MCF 10A (cell line): ENCODE measurements at regions of chr1 and their contacts with region 1.

Region 1: GRCh38 chr1:156728597-156729462 is at the start of gene ISG20L2:
- DNase-seq: peak; percentile 98
- H3K4me3 Mint-ChIP-seq: no peak within 1 kb of the TSS
- H3K27ac Mint-ChIP-seq: no peak within 1 kb of the TSS
- H3K4me1 Mint-ChIP-seq: peaks cover 27% of the 10 kb centered on the region
- H3K27me3 Mint-ChIP-seq: no peaks in the 10 kb centered on the region
- CTCF ChIP-seq: no peak
- total RNA-seq, gene ISG20L2: 49.9 and 57.5 TPM in 2 replicates

Region 2: GRCh38 chr1:156625436-156626078 is 103.3 kb before region 1 on chr1:
- CTCF ChIA-PET with region 1: interaction called, 30 read pairs
- POLR2A ChIA-PET with region 1: interaction called, 3 read pairs
- intact Hi-C with region 1: loop called (anchors 1 kb)
- DNase-seq: peak; percentile 61
- H3K4me3 Mint-ChIP-seq: peak overlapping the region; percentile 35
- H3K27ac Mint-ChIP-seq: no peak overlapping the region
- H3K4me1 Mint-ChIP-seq: peaks cover 12% of the 10 kb centered on the region
- H3K27me3 Mint-ChIP-seq: peaks cover 61% of the 10 kb centered on the region
- CTCF ChIP-seq: peak; percentile 91

Region 3: GRCh38 chr1:156705918-156706656 is 22.7 kb before region 1 on chr1:
- CTCF ChIA-PET with region 1: interaction called, 2,415 read pairs
- POLR2A ChIA-PET with region 1: interaction called, 71 read pairs
- intact Hi-C with region 1: loop called (anchors 1 kb)
- DNase-seq: peak; percentile 57
- H3K4me3 Mint-ChIP-seq: peak overlapping the region; percentile 30
- H3K27ac Mint-ChIP-seq: no peak overlapping the region
- H3K4me1 Mint-ChIP-seq: peaks cover 38% of the 10 kb centered on the region
- H3K27me3 Mint-ChIP-seq: no peaks in the 10 kb centered on the region
- CTCF ChIP-seq: peak; percentile 99

Region 4: GRCh38 chr1:156751758-156752757 is 23.2 kb after region 1 on chr1:
- CTCF ChIA-PET with region 1: interaction called, 136 read pairs
- POLR2A ChIA-PET with region 1: interaction called, 171 read pairs
- intact Hi-C with region 1: loop called (anchors 1 kb)
- DNase-seq: peak; percentile 99
- H3K4me3 Mint-ChIP-seq: peak overlapping the region; percentile 79
- H3K27ac Mint-ChIP-seq: peak overlapping the region; percentile 99
- H3K4me1 Mint-ChIP-seq: peaks cover 37% of the 10 kb centered on the region
- H3K27me3 Mint-ChIP-seq: no peaks in the 10 kb centered on the region
- CTCF ChIP-seq: no peak

Region 5: DNA sequence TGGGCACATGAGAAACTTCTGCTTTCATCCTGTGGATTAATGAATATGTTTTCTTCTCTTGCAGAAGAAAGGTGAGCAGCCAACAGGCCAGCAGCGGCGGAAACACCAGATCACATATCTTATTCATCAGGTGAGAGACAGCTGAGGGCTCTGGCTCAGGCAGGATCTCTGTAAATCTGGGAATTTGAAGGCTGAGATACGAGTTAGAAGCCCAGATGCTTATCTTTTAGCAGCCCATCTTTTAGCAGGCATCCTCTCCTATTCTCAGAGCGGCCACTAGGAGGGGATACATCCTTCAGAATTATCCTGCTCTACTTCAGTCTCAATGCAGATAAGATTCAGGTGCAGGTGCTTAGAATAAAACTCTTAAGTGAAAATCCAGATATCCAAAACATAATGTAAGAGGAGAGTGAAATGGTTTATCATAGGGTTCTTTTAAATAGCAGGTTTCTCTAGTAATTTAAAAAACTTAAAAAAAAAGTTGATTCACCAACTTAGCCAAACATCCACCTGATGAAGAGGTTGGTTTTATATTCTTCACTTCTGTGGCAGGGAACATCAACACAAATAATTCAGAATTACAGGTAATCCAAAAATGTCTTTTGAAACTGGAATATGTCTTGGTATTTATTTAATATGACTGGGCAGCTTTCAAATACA is 68.5 kb after region 1 on chr1:
- CTCF ChIA-PET with region 1: interaction called, 36 read pairs
- POLR2A ChIA-PET with region 1: interaction called, 5 read pairs
- intact Hi-C with region 1: loop called (anchors 1 kb)
- DNase-seq: peak; percentile 82
- H3K4me3 Mint-ChIP-seq: no peak overlapping the region
- H3K27ac Mint-ChIP-seq: no peak overlapping the region
- H3K4me1 Mint-ChIP-seq: no peaks in the 10 kb centered on the region
- H3K27me3 Mint-ChIP-seq: no peaks in the 10 kb centered on the region
- CTCF ChIP-seq: peak; percentile 93

Region 6: GRCh38 chr1:156927215-156928042 is 198.6 kb after region 1 on chr1:
- CTCF ChIA-PET with region 1: interaction called, 40 read pairs
- POLR2A ChIA-PET with region 1: interaction called, 5 read pairs
- intact Hi-C with region 1: loop called (anchors 1 kb)
- DNase-seq: peak; percentile 91
- H3K4me3 Mint-ChIP-seq: peak overlapping the region; percentile 41
- H3K27ac Mint-ChIP-seq: no peak overlapping the region
- H3K4me1 Mint-ChIP-seq: peaks cover 33% of the 10 kb centered on the region
- H3K27me3 Mint-ChIP-seq: peaks cover 58% of the 10 kb centered on the region
- CTCF ChIP-seq: peak; percentile 97